Naive thymus-derived CD8-positive, alpha-beta T cell (primary cell): ENCODE measurements at regions of chrX and their contacts with region 1.

Region 1: DNA sequence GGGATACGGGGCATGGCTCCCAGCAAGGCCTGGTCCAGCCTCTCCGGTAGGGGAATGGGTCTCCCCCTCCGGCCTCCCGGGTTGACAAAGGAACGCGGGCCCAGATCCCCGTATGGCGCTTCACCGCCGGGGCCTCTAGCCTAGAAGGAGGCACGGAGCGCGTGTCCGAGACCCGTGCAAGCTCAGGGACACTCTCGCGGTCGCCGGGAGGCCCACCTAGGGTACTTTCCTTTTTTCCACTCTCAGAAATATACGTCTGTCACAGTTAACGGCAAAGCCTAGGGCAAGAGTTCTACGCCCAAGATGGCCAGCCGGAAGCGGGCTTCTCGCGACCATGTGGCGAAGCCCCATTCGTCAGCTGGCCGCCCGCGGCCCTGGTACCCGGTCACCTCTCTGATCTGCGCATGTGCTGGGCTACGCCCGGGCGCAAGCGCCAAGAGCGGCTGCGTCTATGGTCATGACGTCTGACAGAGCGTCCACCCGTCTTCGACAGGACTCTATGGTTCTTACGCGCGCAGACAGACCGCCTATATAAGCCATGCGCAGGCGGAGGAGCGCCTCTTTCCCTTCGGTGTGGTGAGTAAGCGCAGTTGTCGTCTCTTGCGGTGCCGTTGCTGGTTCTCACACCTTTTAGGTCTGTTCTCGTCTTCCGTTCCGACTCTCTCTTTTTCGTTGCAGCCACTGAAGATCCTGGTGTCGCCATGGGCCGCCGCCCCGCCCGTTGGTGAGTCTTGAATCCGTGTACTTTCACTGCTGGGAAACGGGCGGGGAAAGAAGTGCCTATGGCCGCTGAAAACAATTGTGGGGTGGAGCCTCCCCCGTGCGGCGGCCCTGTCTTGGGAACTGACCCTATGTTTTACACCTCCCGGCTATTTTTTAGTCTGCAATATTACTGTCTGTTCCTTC is at the start of gene RPL10:
- DNase-seq: peak; percentile 64 to 96 (median 87)
- ATAC-seq: peak; percentile 75 to 82
- H3K4me3 Mint-ChIP-seq: peak within 1 kb of the TSS; percentile 94 to 100 (median 96)
- H3K27ac Mint-ChIP-seq: peak within 1 kb of the TSS; percentile 97 to 100 (median 99)
- H3K4me1 Mint-ChIP-seq: peaks cover 10 to 32% (median 22%) of the 10 kb centered on the region in 4 donors
- H3K27me3 Mint-ChIP-seq: no peaks in the 10 kb centered on the region
- polyA plus RNA-seq, gene RPL10: 5,585 to 7,081 (median 6,663) TPM

Region 2: GRCh38 chrX:154378782-154379591 is 19.1 kb before region 1 on chrX and contains the start of gene EMD:
- POLR2A ChIA-PET with region 1: interaction called, 16 read pairs
- DNase-seq: peak; percentile 85 to 99 (median 96)
- ATAC-seq: peak; percentile 79 to 82
- H3K4me3 Mint-ChIP-seq: peak within 1 kb of the TSS; percentile 73 to 92 (median 84)
- H3K27ac Mint-ChIP-seq: peak within 1 kb of the TSS; percentile 74 to 97 (median 94)
- H3K4me1 Mint-ChIP-seq: peaks cover 2 to 23% (median 21%) of the 10 kb centered on the region in 4 donors
- H3K27me3 Mint-ChIP-seq: no peaks in the 10 kb centered on the region
- polyA plus RNA-seq, gene EMD: 35.5 to 37.1 (median 35.7) TPM

Region 3: GRCh38 chrX:154428176-154429010 is 30.3 kb after region 1 on chrX and contains the start of gene ATP6AP1:
- POLR2A ChIA-PET with region 1: interaction called, 37 read pairs
- DNase-seq: peak; percentile 73 to 92 (median 84)
- ATAC-seq: peak; percentile 97 to 98
- H3K4me3 Mint-ChIP-seq: peak within 1 kb of the TSS; percentile 73 to 89 (median 82)
- H3K27ac Mint-ChIP-seq: peak within 1 kb of the TSS; percentile 76 to 92 (median 88)
- H3K4me1 Mint-ChIP-seq: peaks cover 10 to 34% (median 27%) of the 10 kb centered on the region in 4 donors
- H3K27me3 Mint-ChIP-seq: no peaks in the 10 kb centered on the region
- polyA plus RNA-seq, gene ATP6AP1: 84.7 to 111 (median 90.2) TPM

Region 4: DNA sequence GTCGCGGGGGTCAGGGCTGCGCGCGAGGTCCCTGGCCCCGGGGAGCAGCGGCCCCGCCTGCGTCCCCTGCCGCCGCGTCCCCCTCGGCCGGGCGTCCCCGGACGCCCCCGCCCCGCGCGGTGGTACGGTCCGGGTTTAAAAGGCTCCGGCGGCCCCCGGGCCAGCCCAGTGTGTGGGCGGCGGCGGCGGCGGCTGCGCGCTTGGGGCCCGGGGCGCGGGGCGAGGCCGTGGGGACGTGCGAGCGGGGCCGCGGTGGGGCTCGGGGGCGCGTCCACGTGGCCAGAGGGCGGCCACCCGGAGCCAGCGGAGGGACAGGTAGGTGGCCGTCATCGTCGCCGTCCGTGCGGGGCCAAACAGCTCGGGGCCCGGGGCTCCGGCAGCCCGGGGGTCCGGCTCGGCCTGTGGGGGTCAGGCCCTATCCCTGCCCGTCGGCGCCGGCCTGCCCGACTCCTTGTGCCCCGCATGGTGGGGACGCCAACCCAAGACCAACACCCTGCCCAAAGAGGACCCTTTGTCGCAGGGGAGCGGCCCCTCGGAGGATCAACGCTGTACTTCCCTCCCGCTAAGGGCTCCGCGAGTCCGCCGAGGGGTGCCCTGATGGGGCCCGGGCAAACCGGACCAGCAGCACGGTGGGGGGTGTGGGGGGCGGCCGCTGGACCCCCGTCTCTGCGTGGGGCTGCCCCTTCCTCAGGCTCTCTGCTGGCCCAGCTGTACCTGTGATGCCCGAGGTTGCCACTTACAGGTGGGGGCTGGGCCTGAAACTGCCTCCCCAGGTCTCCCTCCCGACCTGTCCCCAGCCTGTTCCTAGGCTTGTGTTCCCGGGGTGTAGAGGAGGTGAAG is 60.3 kb after region 1 on chrX and contains the start of gene PLXNA3:
- POLR2A ChIA-PET with region 1: interaction called, 14 read pairs
- DNase-seq: peak; percentile 33 to 83 (median 69)
- ATAC-seq: peak; percentile 77 to 84
- H3K4me3 Mint-ChIP-seq: peak within 1 kb of the TSS; percentile 89 to 99 (median 93)
- H3K27ac Mint-ChIP-seq: peak within 1 kb of the TSS; percentile 58 to 99 (median 94)
- H3K4me1 Mint-ChIP-seq: peaks cover 8 to 28% (median 19%) of the 10 kb centered on the region in 4 donors
- H3K27me3 Mint-ChIP-seq: no peaks in the 10 kb centered on the region
- polyA plus RNA-seq, gene PLXNA3: 0.27 to 0.67 (median 0.36) TPM

Region 5: GRCh38 chrX:154490414-154491083 is 92.5 kb after region 1 on chrX and contains the start of gene SLC10A3:
- POLR2A ChIA-PET with region 1: interaction called, 102 read pairs
- DNase-seq: peak; percentile 72 to 93 (median 81)
- ATAC-seq: peak; percentile 80 to 83
- H3K4me3 Mint-ChIP-seq: peak within 1 kb of the TSS; percentile 83 to 93 (median 87)
- H3K27ac Mint-ChIP-seq: peak within 1 kb of the TSS; percentile 73 to 96 (median 94)
- H3K4me1 Mint-ChIP-seq: peaks cover 4 to 30% (median 20%) of the 10 kb centered on the region in 4 donors
- H3K27me3 Mint-ChIP-seq: no peaks in the 10 kb centered on the region
- polyA plus RNA-seq, gene SLC10A3: 30.5 to 42.3 (median 35.9) TPM

Region 6: DNA sequence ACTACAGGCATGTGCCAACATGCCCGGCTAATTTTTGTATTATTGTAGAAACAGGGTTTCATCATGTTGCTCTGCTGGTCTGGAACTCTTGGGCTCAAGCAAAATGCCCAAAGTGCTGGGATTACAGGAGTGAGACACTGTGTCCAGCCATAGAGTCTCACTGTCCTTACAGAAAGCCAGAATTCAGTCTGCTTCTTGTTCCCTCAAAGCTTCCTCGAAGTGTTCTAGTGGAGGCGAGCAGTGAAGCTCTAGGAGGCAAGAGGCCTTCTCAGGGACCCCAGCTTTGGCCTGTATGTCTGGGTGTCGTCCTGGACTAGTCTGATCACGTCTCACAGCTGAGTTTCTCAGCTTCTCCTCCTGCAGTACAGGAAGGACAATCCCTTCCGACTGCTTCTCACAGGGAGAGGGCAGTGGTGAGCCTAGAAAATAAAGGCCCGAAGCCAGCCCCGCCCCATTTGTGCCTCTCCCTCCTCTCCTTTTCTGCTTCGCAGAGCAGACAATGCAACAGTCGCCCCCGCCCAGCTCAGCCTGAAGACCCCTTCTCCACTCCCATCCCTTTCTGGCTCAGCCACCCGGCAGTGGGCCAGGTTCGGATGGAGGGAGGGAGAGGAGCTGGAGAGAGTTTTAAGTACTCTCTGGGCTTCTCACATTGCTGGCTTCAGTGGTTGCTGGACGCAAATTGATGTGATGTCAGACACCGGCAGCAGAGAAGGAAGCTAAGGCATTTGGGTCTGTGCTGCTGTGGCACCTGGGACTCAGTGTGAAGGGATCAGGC is 129.0 kb after region 1 on chrX:
- POLR2A ChIA-PET with region 1: interaction called, 35 read pairs
- DNase-seq: peak in 8 of 10 donors; percentile 29 to 72 (median 40)
- ATAC-seq: peak; percentile 80 to 85
- H3K4me3 Mint-ChIP-seq: peak overlapping the region in 6 of 10 donors; percentile 10 to 56 (median 34)
- H3K27ac Mint-ChIP-seq: peak overlapping the region in 8 of 10 donors; percentile 52 to 80 (median 72)
- H3K4me1 Mint-ChIP-seq: peaks cover 3 to 26% (median 20%) of the 10 kb centered on the region in 4 donors
- H3K27me3 Mint-ChIP-seq: no peaks in the 10 kb centered on the region

Region 7: DNA sequence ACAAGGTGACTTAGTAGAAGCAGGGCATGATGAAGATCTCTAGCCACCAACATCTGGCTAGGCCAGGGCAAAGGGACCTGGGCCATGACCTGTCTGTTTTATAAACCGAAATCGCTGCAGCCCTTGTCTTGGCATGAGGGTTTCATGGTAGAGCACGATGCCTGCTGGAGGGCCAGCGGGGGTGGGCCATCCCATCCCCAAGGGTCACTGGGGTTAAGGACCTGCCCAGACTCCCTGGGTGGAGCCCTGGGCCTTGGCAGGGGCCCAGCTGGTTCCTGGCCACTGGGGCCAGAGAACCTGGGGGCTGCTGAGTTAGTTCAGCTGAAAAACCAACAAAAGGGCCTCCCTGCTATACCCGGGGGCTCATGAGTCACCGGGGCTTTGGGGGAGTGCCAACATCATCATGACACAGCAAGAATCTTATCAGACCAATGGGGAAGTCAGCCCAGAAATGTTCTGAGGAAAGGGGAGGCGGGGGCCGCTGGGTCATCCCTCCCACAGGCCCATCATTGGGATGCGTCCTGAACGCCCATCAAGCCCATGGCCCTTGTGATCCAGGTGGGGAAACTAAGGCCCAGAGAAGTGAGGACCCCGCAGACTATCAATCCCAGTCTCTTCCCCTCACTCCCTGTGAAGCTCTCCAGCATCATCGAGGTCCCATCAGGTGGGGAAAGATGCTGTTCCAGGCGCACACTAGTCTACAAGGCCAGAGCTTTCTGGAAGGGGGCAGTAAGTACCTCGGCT is 143.8 kb after region 1 on chrX:
- POLR2A ChIA-PET with region 1: interaction called, 15 read pairs
- DNase-seq: peak in 1 of 10 donors; percentile 27
- ATAC-seq: no peak
- H3K4me3 Mint-ChIP-seq: peak overlapping the region in 9 of 10 donors; percentile 7 to 72 (median 31)
- H3K27ac Mint-ChIP-seq: peak overlapping the region; percentile 52 to 92 (median 88)
- H3K4me1 Mint-ChIP-seq: peaks cover 7 to 50% (median 32%) of the 10 kb centered on the region in 4 donors
- H3K27me3 Mint-ChIP-seq: no peaks in the 10 kb centered on the region

Region 8: DNA sequence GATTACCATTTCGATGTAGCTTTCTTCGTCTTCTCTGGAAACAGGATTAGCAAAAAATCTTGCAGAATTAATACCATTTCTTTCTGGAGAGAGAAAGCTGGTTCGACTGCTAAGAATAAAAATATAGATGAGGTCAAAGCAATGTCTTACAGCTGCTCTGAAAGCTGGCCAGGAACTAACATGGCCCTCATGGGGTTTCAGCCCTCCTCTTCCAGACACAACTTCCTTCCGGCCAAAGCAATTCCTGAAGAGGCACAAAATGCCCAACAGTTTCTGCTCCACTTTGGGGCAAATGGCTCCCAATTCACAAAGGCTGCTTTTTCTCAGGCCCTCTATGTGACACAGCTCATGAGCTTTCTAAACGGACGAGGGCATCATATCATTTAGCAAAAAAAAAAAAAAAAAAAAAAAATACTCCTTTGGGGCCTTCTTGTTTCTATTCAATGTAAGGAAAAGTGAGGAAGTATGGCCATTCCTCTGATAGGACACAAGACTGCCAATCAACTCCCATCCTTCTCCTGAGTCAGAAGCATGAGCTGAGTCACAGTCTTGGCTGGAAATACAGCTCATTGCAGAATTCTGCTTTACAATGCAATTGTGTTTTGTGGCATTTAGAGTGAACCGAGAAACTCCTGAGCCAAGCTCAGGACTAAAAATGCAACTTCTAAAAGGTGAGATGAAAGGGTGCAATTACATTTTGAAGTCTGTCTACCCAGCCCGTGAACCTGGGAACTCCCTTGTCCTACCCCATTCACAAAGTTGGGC is 298.0 kb after region 1 on chrX:
- POLR2A ChIA-PET with region 1: no interaction called
- DNase-seq: no peak
- ATAC-seq: no peak
- H3K4me3 Mint-ChIP-seq: no peak overlapping the region
- H3K27ac Mint-ChIP-seq: peak overlapping the region in 2 of 10 donors; percentile 4 to 53
- H3K4me1 Mint-ChIP-seq: peaks cover 2 to 20% (median 10%) of the 10 kb centered on the region in 4 donors
- H3K27me3 Mint-ChIP-seq: no peaks in the 10 kb centered on the region